A673 (cell line): ENCODE measurements at regions of chr9 and their contacts with region 1.

Region 1: DNA sequence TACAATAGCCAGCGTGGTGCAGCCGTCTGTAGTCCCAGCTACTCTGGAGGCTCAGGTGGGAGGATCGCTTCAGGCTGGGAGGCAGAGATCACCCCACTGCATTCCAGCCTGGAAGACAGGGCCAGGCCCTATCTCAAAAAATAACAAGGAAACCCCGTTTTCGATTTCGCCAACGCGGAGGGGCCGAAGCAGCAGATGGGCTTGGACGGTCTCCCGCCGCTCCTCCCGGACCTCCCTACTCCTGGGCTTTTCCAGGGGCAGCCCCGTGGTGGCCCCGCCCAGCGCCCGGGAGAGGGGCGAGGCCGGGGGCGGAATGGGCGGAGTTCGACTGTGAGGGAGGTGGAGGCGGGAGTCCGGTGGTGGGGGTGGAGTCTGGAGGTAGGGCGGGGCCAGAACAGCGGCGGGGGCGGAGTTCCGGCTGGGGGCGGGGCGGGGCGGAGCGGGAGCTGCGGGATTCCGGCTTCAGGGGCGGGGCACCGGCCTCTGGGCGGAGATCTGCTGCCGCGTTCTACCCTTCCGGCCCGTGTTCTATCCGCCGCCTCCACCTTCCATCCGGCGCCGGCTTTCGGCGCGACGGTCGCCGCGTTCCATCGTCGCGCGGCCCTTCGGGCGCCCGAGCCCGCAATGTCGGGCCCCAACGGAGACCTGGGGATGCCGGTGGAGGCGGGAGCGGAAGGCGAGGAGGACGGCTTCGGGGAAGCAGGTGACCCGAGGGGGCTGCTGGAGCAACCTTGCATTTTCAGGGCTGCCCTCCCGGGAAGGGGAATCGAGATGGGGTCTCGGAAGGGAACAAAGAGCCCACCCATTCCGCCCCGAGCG is at the start of gene BBLN:
- DNase-seq: peak; percentile 95
- H3K4me3 ChIP-seq: peak within 1 kb of the TSS; percentile 58
- H3K27ac ChIP-seq: peak within 1 kb of the TSS; percentile 60
- H3K4me1 ChIP-seq: peaks cover 7% of the 10 kb centered on the region
- H3K27me3 ChIP-seq: no peaks in the 10 kb centered on the region
- CTCF ChIP-seq: no peak
- total RNA-seq, gene BBLN: 41.9 and 50.2 TPM in 2 replicates

Region 2: DNA sequence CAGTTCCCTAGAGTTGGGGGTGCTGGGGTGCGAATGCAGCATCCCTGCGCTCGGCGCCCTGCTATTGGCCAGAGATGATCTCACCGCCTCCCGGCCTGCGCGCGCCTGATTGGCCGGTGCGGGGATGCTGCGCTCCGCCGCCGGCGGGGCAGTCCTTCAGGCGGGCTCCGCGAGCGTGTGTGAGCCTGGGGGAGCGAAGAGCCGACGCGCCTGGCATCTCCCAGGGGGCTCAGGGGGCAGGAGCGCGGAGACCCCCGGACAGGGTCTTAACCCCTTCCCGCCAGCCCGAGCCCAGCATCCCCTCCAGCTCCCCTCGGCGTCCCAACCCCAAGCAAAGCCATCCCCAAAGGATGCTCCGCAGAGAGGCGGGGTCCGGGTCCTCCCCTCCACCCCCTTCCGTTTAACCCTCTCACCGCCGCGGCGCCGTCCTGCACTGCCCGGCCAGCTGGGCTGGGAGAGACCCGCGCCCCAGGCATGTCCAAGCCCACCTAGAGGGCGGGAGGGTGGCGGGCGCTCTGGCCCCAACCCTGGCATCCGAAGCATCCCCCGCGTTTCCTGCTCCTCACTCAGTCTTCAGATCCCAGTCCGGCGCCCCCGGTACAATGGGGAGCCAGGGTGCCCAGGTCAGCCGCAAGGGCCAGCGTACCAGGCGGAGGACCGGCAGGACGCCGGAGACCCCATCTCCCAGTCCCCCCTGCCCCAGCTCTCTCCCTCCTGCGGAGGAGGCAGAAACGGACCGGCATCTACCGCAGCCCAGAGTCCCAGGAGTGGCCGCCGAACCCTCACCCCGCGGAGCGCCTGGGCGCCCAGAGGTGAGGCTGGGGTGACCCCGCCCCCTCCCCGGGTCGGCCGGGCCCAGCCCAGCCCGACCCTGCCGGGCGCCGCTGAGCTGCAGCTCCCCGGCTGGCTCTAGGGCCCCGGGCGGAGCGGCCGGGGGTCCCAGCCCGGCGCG is 405.6 kb before region 1 on chr9:
- CTCF ChIA-PET with region 1: no interaction called
- POLR2A ChIA-PET with region 1: no interaction called
- intact Hi-C with region 1: no loop called
- DNase-seq: peak; percentile 51
- H3K4me3 ChIP-seq: no peak overlapping the region
- H3K27ac ChIP-seq: no peak overlapping the region
- H3K4me1 ChIP-seq: peaks cover 3% of the 10 kb centered on the region
- H3K27me3 ChIP-seq: peaks cover 52% of the 10 kb centered on the region
- CTCF ChIP-seq: no peak

Region 3: GRCh38 chr9:128203024-128203706 is 43.2 kb after region 1 on chr9 and contains the start of gene DNM1:
- CTCF ChIA-PET with region 1: no interaction called
- POLR2A ChIA-PET with region 1: no interaction called
- intact Hi-C with region 1: no loop called
- DNase-seq: peak; percentile 81
- H3K4me3 ChIP-seq: peak within 1 kb of the TSS; percentile 64
- H3K27ac ChIP-seq: no peak within 1 kb of the TSS
- H3K4me1 ChIP-seq: peaks cover 3% of the 10 kb centered on the region
- H3K27me3 ChIP-seq: no peaks in the 10 kb centered on the region
- CTCF ChIP-seq: peak; percentile 51; the same call in 1 of the 2 replicates
- total RNA-seq, gene DNM1: 7.6 and 11.8 TPM in 2 replicates

Region 4: GRCh38 chr9:128455849-128456612 is 296.0 kb after region 1 on chr9 and contains the start of gene ODF2:
- CTCF ChIA-PET with region 1: no interaction called
- POLR2A ChIA-PET with region 1: interaction called, 11 read pairs
- intact Hi-C with region 1: no loop called
- DNase-seq: peak; percentile 98
- H3K4me3 ChIP-seq: peak within 1 kb of the TSS; percentile 75
- H3K27ac ChIP-seq: peak within 1 kb of the TSS; percentile 84
- H3K4me1 ChIP-seq: peaks cover 7% of the 10 kb centered on the region
- H3K27me3 ChIP-seq: no peaks in the 10 kb centered on the region
- CTCF ChIP-seq: no peak
- total RNA-seq, gene ODF2: 80.6 and 83.1 TPM in 2 replicates